Dendritic cell treated with granulocyte-macrophage colony-stimulating factor and Interleukin-4, amounts not matched to agents 40 ng/mL and 50 ng/mL, for 4 days (primary cell): ENCODE measurements at regions of chr4 and their contacts with region 1.

Region 1: GRCh38 chr4:172830295-172830764 is 338.3 kb upstream of the GALNT7 start:
- H3K4me3 Mint-ChIP-seq: no peak overlapping the region
- H3K27ac Mint-ChIP-seq: no peak overlapping the region
- H3K4me1 Mint-ChIP-seq: no peaks in the 10 kb centered on the region
- H3K27me3 Mint-ChIP-seq: peaks cover 3% of the 10 kb centered on the region

Region 2: DNA sequence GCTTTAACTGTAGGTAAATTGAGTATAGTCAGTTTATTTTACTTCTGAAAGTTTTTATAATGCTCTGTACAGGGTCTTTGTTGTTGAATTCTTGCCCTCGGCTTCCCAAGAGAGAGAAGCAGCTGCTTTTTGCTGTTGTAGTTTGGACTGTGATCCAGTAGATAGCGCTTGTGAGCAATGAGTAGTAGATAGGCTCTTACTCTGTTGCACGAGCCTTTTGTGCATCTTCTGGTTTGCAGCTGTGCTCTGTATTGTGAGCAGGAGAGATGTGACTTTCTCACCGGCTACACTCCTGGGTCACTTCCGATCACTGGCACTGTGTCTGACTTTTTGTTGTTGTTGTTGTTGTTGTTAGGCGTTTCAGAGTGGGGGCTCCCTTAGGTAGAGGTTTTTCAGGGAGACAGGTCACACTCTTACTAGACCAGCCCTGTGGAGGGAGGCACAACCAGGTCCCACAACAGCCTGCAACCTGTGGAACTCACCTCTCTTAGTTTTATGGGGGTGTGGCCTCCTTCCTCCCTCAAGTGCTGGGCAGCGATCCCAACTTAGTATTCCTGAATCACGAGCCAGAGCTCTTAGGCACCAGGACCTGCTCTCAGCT is 1839.2 kb before region 1 on chr4:
- intact Hi-C with region 1: loop called (anchors 5 kb)
- H3K4me3 Mint-ChIP-seq: no peak overlapping the region
- H3K27ac Mint-ChIP-seq: no peak overlapping the region
- H3K4me1 Mint-ChIP-seq: no peaks in the 10 kb centered on the region
- H3K27me3 Mint-ChIP-seq: no peaks in the 10 kb centered on the region

Region 3: GRCh38 chr4:171846232-171846631 is 984.1 kb before region 1 on chr4:
- intact Hi-C with region 1: loop called (anchors 2 kb)
- H3K4me3 Mint-ChIP-seq: no peak overlapping the region
- H3K27ac Mint-ChIP-seq: no peak overlapping the region
- H3K4me1 Mint-ChIP-seq: no peaks in the 10 kb centered on the region
- H3K27me3 Mint-ChIP-seq: no peaks in the 10 kb centered on the region

Region 4: DNA sequence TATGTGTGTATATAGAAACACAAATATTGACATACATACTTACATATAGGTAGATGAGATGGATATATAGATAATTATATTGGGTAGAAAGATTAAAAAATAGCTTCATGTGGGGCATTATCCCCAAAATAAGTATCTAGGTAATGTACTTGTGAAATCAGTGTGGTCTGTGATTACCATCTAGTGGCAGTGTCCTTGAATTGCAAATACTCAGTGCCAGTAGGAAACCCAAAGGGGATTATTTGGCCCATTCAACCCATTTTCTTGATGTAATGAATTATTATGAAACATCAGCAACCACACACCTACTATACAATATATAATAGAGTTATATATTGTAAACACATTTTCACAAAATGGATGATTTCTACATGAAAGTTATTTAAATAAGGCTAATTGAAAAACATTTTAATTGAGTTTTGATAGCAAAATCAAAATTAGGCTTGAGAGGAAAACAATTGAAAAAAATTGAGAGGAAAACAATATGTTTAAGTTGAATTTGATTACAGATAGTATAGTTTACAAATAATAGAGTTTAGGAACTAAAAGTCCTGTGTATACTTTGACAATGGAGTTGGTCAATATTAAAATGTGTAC is 627.8 kb before region 1 on chr4:
- intact Hi-C with region 1: loop called (anchors 10 kb)
- H3K4me3 Mint-ChIP-seq: no peak overlapping the region
- H3K27ac Mint-ChIP-seq: no peak overlapping the region
- H3K4me1 Mint-ChIP-seq: peaks cover 20% of the 10 kb centered on the region
- H3K27me3 Mint-ChIP-seq: no peaks in the 10 kb centered on the region